ENCODE measurements at regions of chr11 and their contacts with region 1.

Region 1: GRCh38 chr11:114180301-114181055 is 115.7 kb upstream of the NNMT start:
- DNase-seq: no peak
- H3K4me3 ChIP-seq: peak overlapping the region; percentile 34 to 44 (median 36)
- H3K27ac ChIP-seq: peak overlapping the region; percentile 94 to 99 (median 97)
- H3K4me1 ChIP-seq: peaks cover 0 to 96% (median 92%) of the 10 kb centered on the region in 4 donors
- H3K27me3 ChIP-seq: no peaks in the 10 kb centered on the region
- CTCF ChIP-seq: peak in 2 of 4 experiments; percentile 27 to 50
- EP300 ChIP-seq: no peak
- POLR2A ChIP-seq: no peak

Region 2: GRCh38 chr11:114050258-114050927 is 130.1 kb before region 1 on chr11:
- intact Hi-C with region 1: loop called (anchors 2 kb)
- DNase-seq: peak; percentile 93
- H3K4me3 ChIP-seq: no peak overlapping the region
- H3K27ac ChIP-seq: peak overlapping the region in 3 of 4 donors; percentile 74 to 80 (median 77)
- H3K4me1 ChIP-seq: peaks cover 0 to 46% (median 15%) of the 10 kb centered on the region in 4 donors
- H3K27me3 ChIP-seq: no peaks in the 10 kb centered on the region
- CTCF ChIP-seq: no peak
- EP300 ChIP-seq: peak; percentile 98 to 99 (median 99)
- POLR2A ChIP-seq: no peak

Region 3: GRCh38 chr11:114197799-114198500 is 17.5 kb after region 1 on chr11:
- intact Hi-C with region 1: loop called (anchors 1 kb)
- DNase-seq: peak; percentile 97
- H3K4me3 ChIP-seq: peak overlapping the region in 1 of 4 donors; percentile 6
- H3K27ac ChIP-seq: peak overlapping the region; percentile 94 to 99 (median 96)
- H3K4me1 ChIP-seq: peaks cover 0 to 99% (median 94%) of the 10 kb centered on the region in 4 donors
- H3K27me3 ChIP-seq: no peaks in the 10 kb centered on the region
- CTCF ChIP-seq: no peak
- EP300 ChIP-seq: peak; percentile 100
- POLR2A ChIP-seq: peak; percentile 11 to 61

Region 4: GRCh38 chr11:114257621-114258558 is 77.4 kb after region 1 on chr11:
- intact Hi-C with region 1: loop called (anchors 5 kb)
- DNase-seq: peak; percentile 92
- H3K4me3 ChIP-seq: peak overlapping the region in 2 of 4 donors; percentile 11 to 13
- H3K27ac ChIP-seq: peak overlapping the region; percentile 77 to 85 (median 78)
- H3K4me1 ChIP-seq: peaks cover 0 to 63% (median 48%) of the 10 kb centered on the region in 4 donors
- H3K27me3 ChIP-seq: no peaks in the 10 kb centered on the region
- CTCF ChIP-seq: peak in 1 of 4 experiments; percentile 11
- EP300 ChIP-seq: no peak
- POLR2A ChIP-seq: no peak

Region 5: GRCh38 chr11:114295676-114296604 is 115.5 kb after region 1 on chr11 and contains the start of gene NNMT:
- intact Hi-C with region 1: loop called (anchors 1 kb)
- DNase-seq: peak; percentile 90
- H3K4me3 ChIP-seq: peak within 1 kb of the TSS; percentile 24 to 43 (median 40)
- H3K27ac ChIP-seq: peak within 1 kb of the TSS; percentile 81 to 96 (median 86)
- H3K4me1 ChIP-seq: peaks cover 0 to 64% (median 58%) of the 10 kb centered on the region in 4 donors
- H3K27me3 ChIP-seq: no peaks in the 10 kb centered on the region
- CTCF ChIP-seq: no peak
- EP300 ChIP-seq: peak in 3 of 4 donors; percentile 68 to 81 (median 79)
- POLR2A ChIP-seq: peak in 1 of 2 donors; percentile 17
- total RNA-seq, gene NNMT: 126 to 960 (median 409) TPM